HAP-1 (cell line): ENCODE measurements at regions of chr1 and their contacts with region 1.

Region 1: DNA sequence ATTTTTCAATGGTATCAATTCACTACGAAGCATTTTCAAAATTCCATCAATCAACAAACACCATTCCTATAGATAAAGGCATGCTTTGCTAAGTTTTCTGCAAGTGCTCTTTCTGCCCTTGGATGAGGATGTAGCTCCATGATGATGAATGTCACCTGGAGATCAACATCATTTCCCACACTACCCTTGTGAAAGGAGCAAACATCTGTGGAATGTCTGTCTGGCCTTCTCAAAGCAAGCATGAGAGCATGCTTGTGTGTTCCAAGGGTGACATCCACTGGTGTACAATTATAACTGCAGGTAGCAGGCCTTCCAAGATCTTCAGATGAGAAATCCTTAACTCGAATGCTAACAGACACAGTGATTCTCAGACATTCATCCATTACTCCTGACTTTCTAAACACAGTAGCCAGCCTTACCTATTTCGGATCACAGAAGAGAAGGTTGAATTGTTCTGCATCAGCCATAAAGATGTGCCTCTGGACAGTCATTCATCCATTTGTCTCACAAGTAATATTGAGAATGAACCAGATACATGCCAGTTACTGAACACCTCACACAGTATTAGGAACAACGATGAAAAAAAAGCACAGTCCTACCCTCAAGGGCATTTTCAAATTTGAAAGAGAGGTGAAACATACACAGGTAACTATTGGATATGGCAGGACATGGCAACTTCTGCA is 162.4 kb downstream of the TPR start:
- DNase-seq: peak; percentile 57 to 71
- H3K4me3 ChIP-seq: no peak overlapping the region
- H3K4me1 ChIP-seq: no peaks in the 10 kb centered on the region
- H3K27me3 ChIP-seq: no peaks in the 10 kb centered on the region

Region 2: DNA sequence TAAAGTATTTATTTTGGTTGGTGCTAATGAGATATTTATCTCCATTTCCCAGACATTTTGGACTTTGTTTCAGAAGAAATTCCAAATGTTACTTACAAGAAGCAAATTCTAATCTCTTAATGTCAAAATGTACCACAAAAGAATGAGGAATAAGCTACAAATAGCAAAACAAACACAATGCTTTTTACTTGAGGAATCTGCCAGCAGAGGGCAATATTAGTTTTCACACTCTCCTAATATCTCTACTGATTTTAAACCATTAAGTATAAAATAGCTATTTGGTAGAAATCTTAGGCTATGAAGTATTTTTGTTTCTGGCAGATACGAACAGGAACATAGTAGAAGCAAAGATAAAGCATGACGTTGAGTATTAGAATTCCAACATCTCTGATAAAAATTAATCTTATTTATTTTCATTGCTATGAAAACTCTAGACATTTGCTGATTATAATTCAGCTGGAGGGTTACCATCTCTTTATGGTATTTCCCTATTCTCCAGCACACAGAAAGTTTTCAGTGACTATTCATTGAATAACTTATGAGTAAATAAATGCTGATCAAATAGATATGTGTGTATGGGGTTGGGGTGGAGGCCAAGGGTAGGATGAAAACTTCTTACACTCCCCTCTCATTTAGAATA is 491.9 kb before region 1 on chr1:
- in situ Hi-C with region 1: loop called (anchors 25 kb)
- DNase-seq: peak in 1 of 2 experiments; percentile 39
- H3K4me3 ChIP-seq: no peak overlapping the region
- H3K4me1 ChIP-seq: no peaks in the 10 kb centered on the region; the same call in 1 of the 2 replicates
- H3K27me3 ChIP-seq: no peaks in the 10 kb centered on the region

Region 3: DNA sequence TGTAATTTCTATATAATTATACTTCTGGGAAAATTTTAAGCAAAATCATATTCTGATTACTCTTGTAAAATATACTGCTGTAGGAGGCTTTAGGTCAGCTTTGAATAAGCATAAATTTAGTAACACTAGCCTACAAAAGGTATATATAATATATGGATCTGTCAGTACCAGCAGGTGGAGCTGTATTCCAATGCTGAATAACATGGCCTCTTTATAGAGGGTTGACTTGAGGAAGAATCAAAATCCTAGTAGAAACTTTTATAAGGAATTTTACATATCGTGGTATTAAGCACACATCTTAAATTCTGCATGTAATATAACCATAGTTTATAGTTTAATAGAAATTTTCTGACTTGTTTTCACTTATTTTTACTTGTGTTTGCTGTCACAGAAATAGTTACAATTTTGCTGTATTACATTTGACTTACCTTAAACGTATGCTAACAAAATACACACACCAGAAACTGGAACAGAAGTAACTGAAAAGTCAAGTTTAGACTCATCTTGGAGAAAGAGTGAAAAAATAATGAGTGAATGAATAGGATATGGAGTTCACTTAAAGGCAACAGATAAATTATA is 399.2 kb before region 1 on chr1:
- in situ Hi-C with region 1: loop called (anchors 25 kb)
- DNase-seq: peak; percentile 53 to 57
- H3K4me3 ChIP-seq: no peak overlapping the region
- H3K4me1 ChIP-seq: no peaks in the 10 kb centered on the region
- H3K27me3 ChIP-seq: peaks cover 9% of the 10 kb centered on the region

Region 4: DNA sequence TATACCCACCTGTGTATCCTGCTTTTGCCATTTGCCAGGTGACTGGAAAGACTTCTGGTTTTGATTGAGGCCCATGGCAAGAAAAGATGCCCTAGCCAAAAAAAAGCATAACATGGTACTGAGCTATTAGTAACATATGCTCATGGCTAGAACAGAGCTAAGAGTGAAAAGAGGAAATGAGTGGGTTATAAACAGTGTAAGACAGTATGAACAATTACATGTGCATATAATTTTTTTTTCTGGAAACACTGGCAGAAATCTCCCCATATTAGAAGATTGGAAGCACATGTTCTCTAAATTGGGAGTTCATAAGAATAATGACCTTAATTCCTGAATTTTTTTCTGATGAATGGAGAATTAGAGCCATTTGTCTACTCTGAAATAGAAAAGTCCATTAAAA is 289.4 kb after region 1 on chr1:
- in situ Hi-C with region 1: no loop called
- DNase-seq: no peak
- H3K4me3 ChIP-seq: no peak overlapping the region
- H3K4me1 ChIP-seq: peaks cover 6% of the 10 kb centered on the region
- H3K27me3 ChIP-seq: no peaks in the 10 kb centered on the region